ENCODE measurements at regions of chr1 and their contacts with region 1.

Region 1: GRCh38 chr1:184892116-184892515 is 82.2 kb downstream of the NIBAN1 start:
- DNase-seq: no peak
- ATAC-seq: no peak
- H3K4me3 ChIP-seq: no peak overlapping the region
- H3K27ac ChIP-seq: peak overlapping the region; percentile 37
- H3K4me1 ChIP-seq: peaks cover 4% of the 10 kb centered on the region
- H3K27me3 ChIP-seq: no peaks in the 10 kb centered on the region

Region 2: DNA sequence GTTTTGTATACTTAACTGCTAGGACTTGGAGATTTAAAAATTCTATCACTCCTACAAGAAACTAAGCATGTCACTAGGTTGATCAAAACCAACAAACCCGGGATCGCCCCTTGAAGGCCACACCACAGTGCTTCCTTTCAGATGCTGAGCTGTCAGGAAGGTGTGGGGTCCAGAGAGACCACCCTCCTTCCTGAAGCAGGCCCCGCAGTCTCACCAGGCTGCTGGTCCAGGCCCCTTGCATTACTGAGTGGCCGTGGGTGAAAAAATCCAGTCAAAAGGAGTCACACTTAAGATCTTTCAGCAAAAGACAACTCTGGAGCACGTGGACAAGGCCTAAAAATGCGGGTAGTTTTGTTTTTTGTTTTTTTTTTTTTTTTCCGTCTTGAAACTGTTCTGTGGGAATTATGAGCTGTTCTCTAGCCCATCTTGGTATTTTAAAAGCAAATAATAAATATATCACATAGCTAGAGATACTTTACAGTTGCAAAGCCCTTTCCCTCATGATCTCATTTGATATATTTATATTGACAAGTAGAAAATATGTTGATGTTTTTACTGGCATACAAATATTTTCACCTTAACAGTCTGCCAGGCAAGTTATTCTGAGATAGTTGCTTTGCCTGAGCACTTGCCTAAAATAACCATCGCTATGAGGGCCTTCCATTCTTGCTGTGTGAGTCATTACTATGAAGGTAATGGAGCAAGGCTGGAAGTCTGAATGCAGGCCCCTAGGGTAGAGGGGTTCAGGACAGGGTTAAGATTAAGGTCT is 64.3 kb before region 1 on chr1:
- intact Hi-C with region 1: loop called in 1 of 4 experiments (anchors 10 kb)
- DNase-seq: no peak
- ATAC-seq: peak; percentile 74 to 78
- H3K4me3 ChIP-seq: no peak overlapping the region
- H3K27ac ChIP-seq: peak overlapping the region; percentile 93
- H3K4me1 ChIP-seq: peaks cover 16% of the 10 kb centered on the region
- H3K27me3 ChIP-seq: no peaks in the 10 kb centered on the region

Region 3: GRCh38 chr1:185129708-185130107 is 237.6 kb after region 1 on chr1:
- intact Hi-C with region 1: no loop called
- DNase-seq: no peak
- ATAC-seq: no peak
- H3K4me3 ChIP-seq: no peak overlapping the region
- H3K27ac ChIP-seq: no peak overlapping the region
- H3K4me1 ChIP-seq: no peaks in the 10 kb centered on the region
- H3K27me3 ChIP-seq: no peaks in the 10 kb centered on the region

Measured in right cardiac atrium (tissue), 5 donors.